CD4-positive, alpha-beta T cell (primary cell): ENCODE measurements at regions of chr7 and their contacts with region 1.

Region 1: DNA sequence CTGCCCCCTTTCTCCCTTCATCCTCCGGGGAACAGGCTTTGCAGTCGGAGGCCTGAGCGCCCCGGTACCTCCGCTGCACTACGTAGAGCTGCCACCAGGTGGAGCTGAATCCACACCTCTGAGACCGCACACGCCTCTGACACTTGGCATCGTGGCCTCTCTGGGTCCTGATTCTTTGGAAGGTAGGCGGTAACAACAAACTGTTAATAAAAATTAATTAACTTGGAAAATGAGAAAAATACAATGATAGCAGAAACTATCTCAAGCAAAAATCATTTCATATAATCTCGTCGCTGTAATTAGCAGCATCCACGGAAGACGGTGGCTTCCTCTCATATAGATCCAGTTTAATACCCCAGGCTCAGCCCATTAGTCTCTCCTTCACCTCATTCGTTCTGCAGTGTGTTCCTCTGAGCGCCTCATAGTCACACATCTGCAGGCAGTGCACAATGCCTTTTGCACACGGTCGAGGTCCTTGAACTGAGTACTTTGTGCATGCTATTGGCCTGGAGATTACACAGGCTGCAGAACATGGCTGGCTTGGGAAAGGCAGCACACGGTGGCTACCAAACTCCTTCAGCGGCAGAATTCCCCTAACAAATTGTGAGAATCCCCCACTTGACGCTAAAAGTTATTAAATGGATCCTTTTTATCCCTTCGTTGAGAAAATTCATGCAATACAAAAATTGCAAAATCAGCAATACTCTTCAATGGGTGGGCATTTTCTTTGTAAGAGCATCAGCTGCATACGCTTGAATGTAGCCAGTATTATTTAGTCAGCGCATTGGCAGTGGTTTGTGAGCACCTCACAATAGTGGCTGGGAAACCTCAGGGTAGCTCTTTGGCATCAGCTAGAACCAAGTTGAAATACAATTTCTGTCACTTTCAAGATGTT is 18.7 kb downstream of the OR9A2 start:
- DNase-seq: peak; percentile 66 to 91 (median 80)
- ATAC-seq: peak; percentile 96
- H3K4me3 ChIP-seq: no peak overlapping the region
- H3K4me3 Mint-ChIP-seq: no peak overlapping the region
- H3K27ac ChIP-seq: no peak overlapping the region
- H3K27ac Mint-ChIP-seq: no peak overlapping the region
- H3K4me1 ChIP-seq: peaks cover 1% of the 10 kb centered on the region
- H3K4me1 Mint-ChIP-seq: peaks cover 3% of the 10 kb centered on the region
- H3K27me3 ChIP-seq: no peaks in the 10 kb centered on the region
- H3K27me3 Mint-ChIP-seq: peaks cover 4% of the 10 kb centered on the region
- CTCF ChIP-seq: peak; percentile 93

Region 2: GRCh38 chr7:141975806-141976523 is 1032.3 kb before region 1 on chr7:
- CTCF ChIA-PET with region 1: no interaction called
- POLR2A ChIA-PET with region 1: no interaction called
- intact Hi-C with region 1: loop called (anchors 2 to 5 kb)
- DNase-seq: peak; percentile 26 to 76 (median 54)
- ATAC-seq: peak; percentile 78
- H3K4me3 ChIP-seq: peak overlapping the region; percentile 52
- H3K4me3 Mint-ChIP-seq: peak overlapping the region; percentile 68
- H3K27ac ChIP-seq: no peak overlapping the region
- H3K27ac Mint-ChIP-seq: peak overlapping the region; percentile 20
- H3K4me1 ChIP-seq: peaks cover 11% of the 10 kb centered on the region
- H3K4me1 Mint-ChIP-seq: peaks cover 21% of the 10 kb centered on the region
- H3K27me3 ChIP-seq: no peaks in the 10 kb centered on the region
- H3K27me3 Mint-ChIP-seq: no peaks in the 10 kb centered on the region
- CTCF ChIP-seq: peak; percentile 78

Region 3: DNA sequence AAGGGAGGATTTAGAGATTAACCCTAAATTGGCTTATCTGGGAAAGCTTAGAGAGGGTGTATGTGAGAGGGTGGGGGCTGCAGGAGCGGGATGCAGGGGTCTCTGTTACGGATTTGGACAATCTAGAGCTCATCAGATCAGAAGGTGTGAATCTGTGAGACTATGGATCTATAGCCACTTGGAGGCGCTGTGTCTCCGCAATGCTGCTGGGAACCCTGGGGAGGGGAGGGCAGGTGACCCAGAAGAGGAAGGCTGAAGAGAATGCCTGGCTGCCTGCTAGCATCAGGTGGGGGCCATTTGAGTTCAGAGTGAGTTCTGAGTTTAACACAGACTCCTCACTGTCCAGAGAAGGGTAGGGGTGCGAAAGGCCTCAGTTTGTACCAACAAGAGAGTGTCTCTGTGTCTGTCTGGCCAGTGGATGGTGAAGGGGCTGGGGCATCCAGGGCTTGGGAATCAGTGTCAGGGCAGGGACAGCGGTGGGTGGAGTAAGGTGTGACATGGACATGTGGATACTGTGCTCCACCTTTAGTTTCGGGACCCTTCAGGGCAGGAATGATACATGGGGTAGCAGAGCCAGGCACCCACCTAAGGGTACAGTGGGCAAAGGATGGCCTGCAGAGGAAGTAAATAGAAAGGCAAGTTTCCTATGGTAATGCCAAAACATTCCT is 563.1 kb before region 1 on chr7:
- CTCF ChIA-PET with region 1: no interaction called
- POLR2A ChIA-PET with region 1: no interaction called
- intact Hi-C with region 1: loop called in 1 of 2 experiments (anchors 10 kb)
- DNase-seq: peak; percentile 17 to 69 (median 35)
- ATAC-seq: peak; percentile 72
- H3K4me3 ChIP-seq: no peak overlapping the region
- H3K4me3 Mint-ChIP-seq: no peak overlapping the region
- H3K27ac ChIP-seq: no peak overlapping the region
- H3K27ac Mint-ChIP-seq: peak overlapping the region; percentile 71
- H3K4me1 ChIP-seq: peaks cover 30% of the 10 kb centered on the region
- H3K4me1 Mint-ChIP-seq: peaks cover 39% of the 10 kb centered on the region
- H3K27me3 ChIP-seq: no peaks in the 10 kb centered on the region
- H3K27me3 Mint-ChIP-seq: no peaks in the 10 kb centered on the region
- CTCF ChIP-seq: no peak

Region 4: DNA sequence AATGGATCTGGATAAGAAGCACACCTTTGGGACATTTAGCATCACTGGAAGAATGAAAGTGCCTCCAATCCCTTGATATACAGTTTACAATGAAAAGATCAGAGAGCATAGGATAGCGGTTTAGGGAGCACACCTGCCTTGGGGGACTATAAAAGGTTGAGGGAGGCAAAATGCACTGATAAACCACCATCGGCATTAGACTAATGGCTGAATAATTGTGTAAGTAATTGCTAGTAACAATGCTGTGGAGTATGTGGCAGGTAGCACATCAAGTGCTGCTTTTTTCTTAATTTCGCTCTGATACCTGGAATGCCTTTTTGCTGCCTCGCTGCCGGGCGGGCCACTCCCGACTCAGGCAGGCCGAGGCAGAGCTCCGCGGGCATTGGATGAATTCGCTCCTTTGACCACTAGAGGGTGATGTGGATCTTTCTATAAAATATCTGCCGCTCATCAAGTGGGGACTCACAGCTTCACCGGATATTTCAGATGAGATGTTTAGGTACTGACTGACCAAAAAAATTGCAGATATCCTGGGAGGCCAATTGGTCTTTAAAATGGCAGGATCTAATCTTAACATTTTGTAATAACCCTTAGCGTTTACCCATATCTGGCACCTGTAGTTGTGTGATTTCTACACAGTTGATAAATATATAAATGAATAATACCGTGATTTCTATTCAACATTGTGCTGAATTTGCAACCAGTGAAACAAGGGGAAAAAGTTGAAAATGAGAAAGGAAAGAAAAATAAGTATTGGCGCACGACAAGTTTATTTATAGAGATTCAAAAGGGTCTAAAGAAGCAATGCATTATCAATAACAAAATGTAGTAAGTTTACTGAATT is 375.7 kb before region 1 on chr7:
- CTCF ChIA-PET with region 1: no interaction called
- POLR2A ChIA-PET with region 1: no interaction called
- intact Hi-C with region 1: loop called (anchors 1 to 5 kb)
- DNase-seq: peak; percentile 22 to 83 (median 44)
- ATAC-seq: peak; percentile 42
- H3K4me3 ChIP-seq: no peak overlapping the region
- H3K4me3 Mint-ChIP-seq: no peak overlapping the region
- H3K27ac ChIP-seq: no peak overlapping the region
- H3K27ac Mint-ChIP-seq: peak overlapping the region; percentile 54
- H3K4me1 ChIP-seq: peaks cover 8% of the 10 kb centered on the region
- H3K4me1 Mint-ChIP-seq: peaks cover 15% of the 10 kb centered on the region
- H3K27me3 ChIP-seq: no peaks in the 10 kb centered on the region
- H3K27me3 Mint-ChIP-seq: no peaks in the 10 kb centered on the region
- CTCF ChIP-seq: peak; percentile 58

Region 5: GRCh38 chr7:142745091-142745635 is 263.1 kb before region 1 on chr7:
- CTCF ChIA-PET with region 1: no interaction called
- POLR2A ChIA-PET with region 1: no interaction called
- intact Hi-C with region 1: no loop called
- DNase-seq: no peak
- ATAC-seq: no peak
- H3K4me3 ChIP-seq: no peak overlapping the region
- H3K4me3 Mint-ChIP-seq: no peak overlapping the region
- H3K27ac ChIP-seq: no peak overlapping the region
- H3K27ac Mint-ChIP-seq: no peak overlapping the region
- H3K4me1 ChIP-seq: no peaks in the 10 kb centered on the region
- H3K4me1 Mint-ChIP-seq: peaks cover under 1% of the 10 kb centered on the region
- H3K27me3 ChIP-seq: no peaks in the 10 kb centered on the region
- H3K27me3 Mint-ChIP-seq: no peaks in the 10 kb centered on the region
- CTCF ChIP-seq: no peak

Region 6: DNA sequence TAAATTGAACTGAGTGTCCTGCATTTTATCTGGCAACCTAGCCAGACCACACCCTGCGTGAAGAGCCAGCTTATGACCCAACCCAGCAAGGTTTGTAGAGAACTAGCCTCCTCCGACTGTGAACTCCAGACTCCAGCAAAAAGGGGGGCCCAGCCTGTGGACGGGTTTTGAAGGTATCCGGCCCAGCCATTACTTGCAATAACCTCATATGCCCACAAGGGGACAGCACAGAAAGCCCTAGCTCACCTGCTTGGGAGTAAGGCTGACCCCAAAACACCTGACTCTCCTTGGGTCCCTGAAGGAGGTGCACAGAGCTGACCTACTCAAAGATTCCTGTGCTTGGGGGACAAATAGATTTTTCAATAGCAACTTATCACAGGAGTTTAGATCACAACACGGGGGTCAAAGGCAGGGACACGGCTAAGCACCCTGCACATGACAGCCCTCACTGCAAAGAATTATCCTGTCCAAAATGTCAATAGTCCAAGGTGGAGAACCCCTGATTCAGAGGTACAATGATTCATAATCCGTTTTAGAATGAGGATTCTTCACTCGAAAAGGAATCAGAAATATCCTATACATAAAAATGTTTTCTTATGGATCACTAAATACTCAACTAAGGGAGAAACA is 127.3 kb before region 1 on chr7:
- CTCF ChIA-PET with region 1: no interaction called
- POLR2A ChIA-PET with region 1: no interaction called
- intact Hi-C with region 1: loop called in 1 of 2 experiments (anchors 2 kb)
- DNase-seq: peak; percentile 23 to 75 (median 32)
- ATAC-seq: peak; percentile 84
- H3K4me3 ChIP-seq: no peak overlapping the region
- H3K4me3 Mint-ChIP-seq: no peak overlapping the region
- H3K27ac ChIP-seq: no peak overlapping the region
- H3K27ac Mint-ChIP-seq: no peak overlapping the region
- H3K4me1 ChIP-seq: no peaks in the 10 kb centered on the region
- H3K4me1 Mint-ChIP-seq: no peaks in the 10 kb centered on the region
- H3K27me3 ChIP-seq: no peaks in the 10 kb centered on the region
- H3K27me3 Mint-ChIP-seq: peaks cover 5% of the 10 kb centered on the region
- CTCF ChIP-seq: peak; percentile 83

Region 7: GRCh38 chr7:143305423-143306070 is 297.3 kb after region 1 on chr7:
- CTCF ChIA-PET with region 1: no interaction called
- POLR2A ChIA-PET with region 1: no interaction called
- intact Hi-C with region 1: loop called in 1 of 2 experiments (anchors 10 kb)
- DNase-seq: peak; percentile 53 to 81 (median 65)
- ATAC-seq: peak; percentile 74
- H3K4me3 ChIP-seq: no peak overlapping the region
- H3K4me3 Mint-ChIP-seq: no peak overlapping the region
- H3K27ac ChIP-seq: no peak overlapping the region
- H3K27ac Mint-ChIP-seq: peak overlapping the region; percentile 5
- H3K4me1 ChIP-seq: peaks cover 17% of the 10 kb centered on the region
- H3K4me1 Mint-ChIP-seq: peaks cover 25% of the 10 kb centered on the region
- H3K27me3 ChIP-seq: no peaks in the 10 kb centered on the region
- H3K27me3 Mint-ChIP-seq: no peaks in the 10 kb centered on the region
- CTCF ChIP-seq: peak; percentile 64